ENCODE measurements at regions of chr9 and their contacts with region 1.

Region 1: GRCh38 chr9:128026773-128027541 is 40.2 kb downstream of the NAIF1 start:
- DNase-seq: peak; percentile 37
- H3K4me3 Mint-ChIP-seq: peak overlapping the region; percentile 60
- H3K27ac Mint-ChIP-seq: peak overlapping the region; percentile 93
- H3K4me1 Mint-ChIP-seq: peaks cover 81% of the 10 kb centered on the region
- H3K27me3 Mint-ChIP-seq: peaks cover 4% of the 10 kb centered on the region

Region 2: GRCh38 chr9:127980706-127981558 is 46.0 kb before region 1 on chr9 and contains the start of gene EEIG1:
- intact Hi-C with region 1: loop called (anchors 1 kb)
- DNase-seq: peak; percentile 98
- H3K4me3 Mint-ChIP-seq: peak within 1 kb of the TSS; percentile 93
- H3K27ac Mint-ChIP-seq: peak within 1 kb of the TSS; percentile 84
- H3K4me1 Mint-ChIP-seq: peaks cover 48% of the 10 kb centered on the region
- H3K27me3 Mint-ChIP-seq: no peaks in the 10 kb centered on the region
- total RNA-seq, gene EEIG1: 39.8 and 43.4 TPM in 2 replicates

Region 3: DNA sequence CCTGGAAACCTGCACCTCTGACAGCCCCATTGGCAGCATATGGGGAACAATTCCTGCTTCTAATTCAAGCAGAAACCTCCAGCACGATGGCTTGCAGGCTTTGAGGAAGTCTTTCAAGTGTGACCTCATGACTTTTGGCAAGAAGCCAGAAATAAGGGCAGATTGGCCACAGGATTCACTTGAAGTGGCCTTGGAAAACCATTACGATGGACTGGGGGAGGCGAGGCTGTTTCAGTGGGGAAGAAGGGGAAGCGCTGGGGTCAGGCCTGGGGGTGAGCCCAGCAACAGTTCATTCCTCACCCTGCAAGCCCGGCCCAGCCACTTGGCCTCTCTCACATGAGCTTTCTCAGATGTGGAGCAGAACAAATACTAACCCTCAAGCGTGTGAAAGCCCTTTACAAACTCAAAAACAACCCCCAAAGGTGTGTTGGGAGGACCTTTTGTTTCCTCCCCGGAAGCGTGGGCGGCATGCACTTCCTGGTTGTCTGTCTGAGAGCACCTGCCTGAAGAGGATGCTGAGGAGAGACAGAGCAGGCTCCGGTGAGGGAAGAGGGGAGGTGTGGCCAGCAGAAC is 19.3 kb before region 1 on chr9:
- intact Hi-C with region 1: loop called (anchors 1 kb)
- DNase-seq: peak; percentile 68
- H3K4me3 Mint-ChIP-seq: peak overlapping the region; percentile 65
- H3K27ac Mint-ChIP-seq: peak overlapping the region; percentile 93
- H3K4me1 Mint-ChIP-seq: peaks cover 29% of the 10 kb centered on the region
- H3K27me3 Mint-ChIP-seq: peaks cover 3% of the 10 kb centered on the region

Region 4: GRCh38 chr9:128162215-128163026 is 135.5 kb after region 1 on chr9:
- intact Hi-C with region 1: no loop called
- DNase-seq: no peak
- H3K4me3 Mint-ChIP-seq: peak overlapping the region; percentile 84
- H3K27ac Mint-ChIP-seq: no peak overlapping the region
- H3K4me1 Mint-ChIP-seq: peaks cover 14% of the 10 kb centered on the region
- H3K27me3 Mint-ChIP-seq: no peaks in the 10 kb centered on the region